ENCODE measurements at regions of chr6 and their contacts with region 1.

Region 1: DNA sequence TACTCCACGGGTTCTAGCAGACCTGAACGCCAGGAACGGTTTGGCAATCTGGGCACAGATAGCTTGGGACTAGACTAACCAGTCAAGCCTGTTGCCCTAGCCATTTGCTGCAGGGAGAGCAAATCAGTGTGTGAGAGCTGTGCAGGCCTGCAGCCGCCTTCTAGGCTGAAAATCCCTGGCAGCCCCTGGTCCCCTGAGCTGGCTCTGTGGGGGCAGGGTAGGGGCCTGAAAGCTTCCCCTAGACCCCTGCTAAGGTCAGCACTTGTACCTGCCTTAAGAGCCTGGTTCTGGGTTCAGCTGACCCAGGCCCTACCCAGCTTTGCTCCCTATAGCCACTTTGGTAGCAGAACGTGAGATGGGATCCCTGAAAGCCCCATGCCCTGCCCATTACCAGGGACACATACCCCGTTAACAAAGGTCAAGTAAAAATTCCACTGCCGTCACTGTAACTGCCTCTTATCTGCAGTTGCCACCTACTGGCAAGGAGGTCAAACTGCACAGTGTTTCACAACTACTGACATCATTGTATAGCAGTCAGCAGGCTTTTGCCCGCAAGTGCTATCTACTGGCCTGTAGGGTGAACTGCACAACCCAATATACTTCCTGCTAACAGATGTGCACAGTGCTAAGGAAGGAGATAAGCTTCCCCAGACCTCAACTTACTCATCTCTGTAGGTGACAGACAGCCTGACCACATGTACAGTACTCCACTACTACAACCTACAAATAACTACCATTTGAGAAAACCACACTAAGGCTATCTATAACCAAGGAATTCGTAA is 95.1 kb upstream of the OLIG3 start:
- DNase-seq: peak in 7 of 9 donors; percentile 33 to 73 (median 60)
- ATAC-seq: peak; percentile 99
- H3K4me3 ChIP-seq: no peak overlapping the region
- H3K4me3 Mint-ChIP-seq: peak overlapping the region in 6 of 10 donors; percentile 5 to 52 (median 19)
- H3K27ac ChIP-seq: no peak overlapping the region
- H3K27ac Mint-ChIP-seq: peak overlapping the region in 2 of 9 donors; percentile 13 to 39
- H3K4me1 ChIP-seq: peaks cover 0 to 6% of the 10 kb centered on the region in 2 donors
- H3K4me1 Mint-ChIP-seq: peaks cover 5 to 19% (median 9%) of the 10 kb centered on the region in 7 donors
- H3K27me3 ChIP-seq: no peaks in the 10 kb centered on the region
- H3K27me3 Mint-ChIP-seq: peaks cover 4 to 59% (median 5%) of the 10 kb centered on the region in 5 donors

Region 2: GRCh38 chr6:137341681-137342195 is 247.5 kb before region 1 on chr6:
- CTCF ChIA-PET with region 1: interaction called, 12 read pairs
- POLR2A ChIA-PET with region 1: no interaction called
- intact Hi-C with region 1: loop called (anchors 1 kb)
- DNase-seq: peak in 8 of 9 donors; percentile 16 to 62 (median 48)
- ATAC-seq: peak; percentile 80
- H3K4me3 ChIP-seq: peak overlapping the region; percentile 24
- H3K4me3 Mint-ChIP-seq: peak overlapping the region in 9 of 10 donors; percentile 52 to 87 (median 77)
- H3K27ac ChIP-seq: no peak overlapping the region
- H3K27ac Mint-ChIP-seq: peak overlapping the region in 1 of 9 donors; percentile 76
- H3K4me1 ChIP-seq: peaks cover 5 to 10% of the 10 kb centered on the region in 2 donors
- H3K4me1 Mint-ChIP-seq: peaks cover 6 to 19% (median 17%) of the 10 kb centered on the region in 7 donors
- H3K27me3 ChIP-seq: no peaks in the 10 kb centered on the region
- H3K27me3 Mint-ChIP-seq: peaks cover 0 to 55% (median 0%) of the 10 kb centered on the region in 5 donors

Region 3: DNA sequence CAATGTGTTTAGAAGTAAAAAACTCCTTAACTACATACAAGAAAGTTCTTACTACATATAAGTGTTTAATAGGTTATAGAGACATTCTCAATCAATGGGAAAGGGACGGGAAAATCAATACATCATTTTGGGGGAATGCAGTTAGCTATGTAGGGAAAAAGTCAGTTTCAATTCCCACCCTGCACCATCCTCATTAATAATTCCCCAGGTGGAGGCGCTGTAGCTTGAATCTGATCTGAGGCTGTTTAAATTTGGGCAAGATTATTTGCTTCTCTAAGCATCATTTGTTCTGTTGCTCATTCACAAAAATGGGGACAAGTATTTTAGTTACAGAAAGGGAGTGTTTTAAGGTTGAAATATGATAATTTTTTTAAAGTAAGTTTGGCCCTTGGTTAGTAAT is 114.2 kb before region 1 on chr6:
- CTCF ChIA-PET with region 1: interaction called, 49 read pairs
- POLR2A ChIA-PET with region 1: no interaction called
- intact Hi-C with region 1: loop called in 1 of 2 experiments (anchors 1 kb)
- DNase-seq: no peak
- ATAC-seq: no peak
- H3K4me3 ChIP-seq: no peak overlapping the region
- H3K4me3 Mint-ChIP-seq: no peak overlapping the region
- H3K27ac ChIP-seq: no peak overlapping the region
- H3K27ac Mint-ChIP-seq: no peak overlapping the region
- H3K4me1 ChIP-seq: no peaks in the 10 kb centered on the region
- H3K4me1 Mint-ChIP-seq: no peaks in the 10 kb centered on the region
- H3K27me3 ChIP-seq: peaks cover 0 to 4% of the 10 kb centered on the region in 2 donors
- H3K27me3 Mint-ChIP-seq: peaks cover 15 to 62% (median 27%) of the 10 kb centered on the region in 5 donors

Region 4: GRCh38 chr6:137480431-137480830 is 108.8 kb before region 1 on chr6:
- CTCF ChIA-PET with region 1: interaction called, 49 read pairs
- POLR2A ChIA-PET with region 1: no interaction called
- intact Hi-C with region 1: loop called in 1 of 2 experiments (anchors 1 kb)
- DNase-seq: no peak
- ATAC-seq: no peak
- H3K4me3 ChIP-seq: no peak overlapping the region
- H3K4me3 Mint-ChIP-seq: no peak overlapping the region
- H3K27ac ChIP-seq: no peak overlapping the region
- H3K27ac Mint-ChIP-seq: no peak overlapping the region
- H3K4me1 ChIP-seq: no peaks in the 10 kb centered on the region
- H3K4me1 Mint-ChIP-seq: no peaks in the 10 kb centered on the region
- H3K27me3 ChIP-seq: peaks cover 4 to 11% of the 10 kb centered on the region in 2 donors
- H3K27me3 Mint-ChIP-seq: peaks cover 41 to 61% (median 41%) of the 10 kb centered on the region in 5 donors

Region 5: DNA sequence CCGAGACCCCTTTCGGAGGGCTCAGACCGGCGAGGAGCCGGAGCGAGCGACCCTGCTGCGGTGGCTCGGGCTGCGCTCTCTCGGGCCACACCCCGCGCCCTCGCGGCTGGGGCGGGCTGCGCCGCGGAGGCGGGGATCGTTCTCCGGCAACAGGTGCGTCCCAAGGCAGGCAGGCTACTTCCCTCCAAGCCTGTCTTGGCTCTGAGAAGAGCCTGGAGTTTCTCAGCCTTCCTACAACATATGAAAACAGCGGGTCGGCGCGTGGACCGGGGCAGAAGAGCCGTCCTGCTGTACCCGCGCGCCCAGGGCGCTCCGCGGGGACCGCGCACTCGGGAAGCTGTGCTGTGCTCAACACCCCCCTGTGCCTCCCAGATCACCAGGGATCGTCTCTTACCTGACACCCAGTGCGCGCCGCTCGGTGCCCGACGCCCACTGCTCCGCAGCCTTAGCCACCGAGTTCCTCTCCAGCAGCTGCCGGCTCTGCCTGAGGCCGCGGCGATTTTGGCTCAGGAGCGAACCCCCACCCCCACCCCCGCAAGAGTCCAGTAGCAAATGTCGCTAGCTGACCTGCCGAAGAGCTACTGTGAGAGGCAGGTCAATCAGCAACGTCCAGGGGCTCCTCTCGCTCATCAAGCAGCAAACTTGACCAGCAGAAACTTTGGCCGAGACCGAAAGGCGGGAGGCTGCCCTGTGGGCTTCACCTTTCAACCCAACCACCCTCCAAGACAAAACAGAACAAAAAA is 91.4 kb before region 1 on chr6:
- CTCF ChIA-PET with region 1: interaction called, 7 read pairs
- POLR2A ChIA-PET with region 1: interaction called, 3 read pairs
- intact Hi-C with region 1: loop called in 1 of 2 experiments (anchors 5 kb)
- DNase-seq: peak in 4 of 9 donors; percentile 17 to 32 (median 28)
- ATAC-seq: peak; percentile 52
- H3K4me3 ChIP-seq: peak overlapping the region; percentile 34
- H3K4me3 Mint-ChIP-seq: peak overlapping the region; percentile 28 to 81 (median 56)
- H3K27ac ChIP-seq: no peak overlapping the region
- H3K27ac Mint-ChIP-seq: peak overlapping the region in 1 of 9 donors; percentile 13
- H3K4me1 ChIP-seq: peaks cover 35 to 36% of the 10 kb centered on the region in 2 donors
- H3K4me1 Mint-ChIP-seq: peaks cover 22 to 52% (median 39%) of the 10 kb centered on the region in 7 donors
- H3K27me3 ChIP-seq: peaks cover 47 to 55% of the 10 kb centered on the region in 2 donors
- H3K27me3 Mint-ChIP-seq: peaks cover 45 to 91% (median 76%) of the 10 kb centered on the region in 5 donors

Region 6: DNA sequence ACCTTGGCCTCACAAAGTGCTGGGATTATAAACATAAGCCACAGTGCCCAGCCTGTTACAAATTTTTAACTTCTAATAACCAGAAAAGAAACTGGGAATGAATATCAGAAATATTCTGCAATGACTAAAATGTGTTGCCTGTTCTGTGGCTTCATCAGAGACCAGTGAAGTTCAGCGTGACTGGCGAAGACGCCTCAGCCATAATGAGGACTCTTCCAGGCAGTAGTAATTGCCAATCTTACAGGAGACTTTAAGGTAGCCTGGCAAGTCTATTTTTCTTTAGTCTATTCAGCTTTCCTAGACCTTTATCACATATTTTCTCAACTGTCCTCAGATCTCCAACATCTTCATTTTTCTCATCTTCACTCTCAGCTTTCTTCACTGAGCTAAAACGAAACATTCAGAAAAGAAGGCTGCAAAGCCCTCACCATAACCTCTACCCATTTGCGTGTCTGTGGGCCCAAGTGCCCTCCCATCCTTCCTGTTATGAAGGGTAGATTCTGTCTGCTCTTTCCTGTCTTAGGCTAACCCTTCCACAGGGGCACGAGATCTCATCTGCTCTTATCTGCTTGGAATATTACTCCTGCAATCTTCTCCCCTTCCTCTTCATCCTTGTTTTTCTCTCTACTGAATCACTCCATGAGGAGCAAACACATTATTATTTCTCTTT is 53.0 kb before region 1 on chr6:
- CTCF ChIA-PET with region 1: interaction called, 10 read pairs
- POLR2A ChIA-PET with region 1: interaction called, 5 read pairs
- intact Hi-C with region 1: loop called in 1 of 2 experiments (anchors 2 kb)
- DNase-seq: peak in 6 of 9 donors; percentile 11 to 68 (median 44)
- ATAC-seq: peak; percentile 91
- H3K4me3 ChIP-seq: no peak overlapping the region
- H3K4me3 Mint-ChIP-seq: no peak overlapping the region
- H3K27ac ChIP-seq: no peak overlapping the region
- H3K27ac Mint-ChIP-seq: no peak overlapping the region
- H3K4me1 ChIP-seq: peaks cover 18 to 24% of the 10 kb centered on the region in 2 donors
- H3K4me1 Mint-ChIP-seq: peaks cover 0 to 7% (median 0%) of the 10 kb centered on the region in 7 donors
- H3K27me3 ChIP-seq: no peaks in the 10 kb centered on the region
- H3K27me3 Mint-ChIP-seq: peaks cover 0 to 16% (median 5%) of the 10 kb centered on the region in 5 donors

Region 7: GRCh38 chr6:137552809-137553208 is 36.4 kb before region 1 on chr6:
- CTCF ChIA-PET with region 1: no interaction called
- POLR2A ChIA-PET with region 1: no interaction called
- intact Hi-C with region 1: loop called in 1 of 2 experiments (anchors 2 kb)
- DNase-seq: no peak
- ATAC-seq: no peak
- H3K4me3 ChIP-seq: no peak overlapping the region
- H3K4me3 Mint-ChIP-seq: no peak overlapping the region
- H3K27ac ChIP-seq: no peak overlapping the region
- H3K27ac Mint-ChIP-seq: no peak overlapping the region
- H3K4me1 ChIP-seq: no peaks in the 10 kb centered on the region
- H3K4me1 Mint-ChIP-seq: peaks cover 0 to 17% (median 8%) of the 10 kb centered on the region in 7 donors
- H3K27me3 ChIP-seq: no peaks in the 10 kb centered on the region
- H3K27me3 Mint-ChIP-seq: peaks cover 0 to 30% (median 0%) of the 10 kb centered on the region in 5 donors

Measured in naive thymus-derived CD4-positive, alpha-beta T cell (primary cell).